Dendritic cell treated with granulocyte-macrophage colony-stimulating factor and Interleukin-4, amounts not matched to agents 40 ng/mL and 50 ng/mL, for 4 days (primary cell): ENCODE measurements at regions of chr2 and their contacts with region 1.

Region 1: DNA sequence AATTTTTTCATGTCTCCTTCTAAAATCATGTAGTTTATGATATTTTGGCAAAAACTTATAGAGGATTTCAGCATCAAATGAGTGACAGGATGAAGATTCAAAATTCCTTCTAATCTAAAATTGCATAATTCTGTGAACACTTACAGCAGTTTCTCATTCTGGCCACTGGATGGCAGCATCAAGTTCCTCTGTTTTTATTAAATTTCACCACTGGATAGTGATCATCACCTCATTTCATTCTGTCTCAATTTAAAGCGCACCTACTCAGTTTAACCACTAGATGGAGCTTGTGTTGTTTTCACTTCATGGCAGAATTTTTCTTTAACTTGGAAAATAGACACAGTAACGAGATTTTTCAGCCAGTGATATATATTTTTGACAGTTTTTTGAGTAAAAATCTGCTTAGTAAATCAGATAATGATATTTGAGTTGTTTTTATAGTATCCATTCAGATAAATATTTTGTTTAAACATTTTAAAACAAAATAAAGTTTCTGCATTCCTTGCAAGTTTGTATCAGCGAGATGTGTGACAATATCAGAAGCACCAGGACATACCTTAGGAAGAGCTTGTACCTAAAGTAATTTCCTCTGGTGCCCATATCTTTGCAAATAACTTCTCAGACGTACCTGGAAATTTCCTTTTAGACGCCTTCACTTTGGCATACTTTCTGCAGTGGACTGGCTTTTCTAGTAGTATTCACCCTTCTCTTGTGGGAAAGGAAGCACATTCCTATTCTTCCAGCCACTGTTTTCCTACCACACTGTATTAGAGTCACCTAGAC is 94.7 kb upstream of the ARHGAP15 start:
- H3K4me3 Mint-ChIP-seq: no peak overlapping the region
- H3K27ac Mint-ChIP-seq: no peak overlapping the region
- H3K4me1 Mint-ChIP-seq: peaks cover 9% of the 10 kb centered on the region
- H3K27me3 Mint-ChIP-seq: no peaks in the 10 kb centered on the region

Region 2: DNA sequence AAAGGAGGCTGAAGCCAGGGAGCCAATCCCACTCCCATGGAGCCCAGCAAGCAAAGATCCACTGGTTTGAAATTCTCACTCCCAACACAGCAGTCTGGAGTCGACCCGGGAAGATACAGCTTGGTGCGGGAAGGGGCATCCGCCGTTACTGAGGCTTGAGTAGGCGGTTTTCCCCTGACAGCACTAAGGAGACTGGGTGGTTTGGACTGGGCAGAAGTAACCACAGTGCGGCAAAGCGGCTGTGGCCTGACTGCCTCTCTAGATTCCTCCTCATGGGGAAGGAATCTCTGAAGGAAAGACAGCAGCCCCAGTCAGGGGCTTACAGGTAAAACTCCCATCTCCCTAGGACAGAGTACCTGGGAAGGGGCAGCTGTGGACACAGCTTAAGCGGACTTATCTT is 418.6 kb before region 1 on chr2:
- intact Hi-C with region 1: no loop called
- H3K4me3 Mint-ChIP-seq: no peak overlapping the region
- H3K27ac Mint-ChIP-seq: no peak overlapping the region
- H3K4me1 Mint-ChIP-seq: no peaks in the 10 kb centered on the region
- H3K27me3 Mint-ChIP-seq: peaks cover 1% of the 10 kb centered on the region

Region 3: GRCh38 chr2:143083636-143084035 is 49.2 kb after region 1 on chr2:
- intact Hi-C with region 1: loop called (anchors 10 kb)
- H3K4me3 Mint-ChIP-seq: no peak overlapping the region
- H3K27ac Mint-ChIP-seq: no peak overlapping the region
- H3K4me1 Mint-ChIP-seq: peaks cover 7% of the 10 kb centered on the region
- H3K27me3 Mint-ChIP-seq: no peaks in the 10 kb centered on the region

Region 4: GRCh38 chr2:143223556-143223955 is 189.1 kb after region 1 on chr2:
- intact Hi-C with region 1: loop called (anchors 5 kb)
- H3K4me3 Mint-ChIP-seq: no peak overlapping the region
- H3K27ac Mint-ChIP-seq: no peak overlapping the region
- H3K4me1 Mint-ChIP-seq: no peaks in the 10 kb centered on the region
- H3K27me3 Mint-ChIP-seq: no peaks in the 10 kb centered on the region